ENCODE measurements at regions of chr21 and their contacts with region 1.

Region 1: GRCh38 chr21:36209626-36210171 is 53.1 kb downstream of the DOP1B start:
- H3K4me3 ChIP-seq: no peak overlapping the region
- H3K27ac ChIP-seq: peak overlapping the region; percentile 53
- H3K4me1 ChIP-seq: peaks cover 5% of the 10 kb centered on the region
- CTCF ChIP-seq: peak; percentile 81

Region 2: GRCh38 chr21:36141513-36141925 is 68.2 kb before region 1 on chr21:
- CTCF ChIA-PET with region 1: interaction called, 59 read pairs
- POLR2A ChIA-PET with region 1: interaction called, 11 read pairs
- H3K4me3 ChIP-seq: no peak overlapping the region
- H3K27ac ChIP-seq: no peak overlapping the region
- H3K4me1 ChIP-seq: no peaks in the 10 kb centered on the region
- CTCF ChIP-seq: peak; percentile 95

Region 3: GRCh38 chr21:36156339-36156814 is 53.3 kb before region 1 on chr21:
- CTCF ChIA-PET with region 1: interaction called, 74 read pairs
- POLR2A ChIA-PET with region 1: interaction called, 18 read pairs
- H3K4me3 ChIP-seq: peak overlapping the region; percentile 73
- H3K27ac ChIP-seq: peak overlapping the region; percentile 73; the same call in 1 of the 2 replicates
- H3K4me1 ChIP-seq: no peaks in the 10 kb centered on the region
- CTCF ChIP-seq: no peak

Region 4: GRCh38 chr21:36195613-36196012 is 14.1 kb before region 1 on chr21:
- CTCF ChIA-PET with region 1: interaction called, 10 read pairs
- POLR2A ChIA-PET with region 1: interaction called, 3 read pairs
- H3K4me3 ChIP-seq: no peak overlapping the region
- H3K27ac ChIP-seq: no peak overlapping the region
- H3K4me1 ChIP-seq: no peaks in the 10 kb centered on the region
- CTCF ChIP-seq: no peak

Region 5: GRCh38 chr21:36450511-36450910 is 240.8 kb after region 1 on chr21:
- CTCF ChIA-PET with region 1: no interaction called
- POLR2A ChIA-PET with region 1: no interaction called
- H3K4me3 ChIP-seq: no peak overlapping the region
- H3K27ac ChIP-seq: no peak overlapping the region
- H3K4me1 ChIP-seq: peaks cover 5% of the 10 kb centered on the region
- CTCF ChIP-seq: no peak